Panc1 (cell line): ENCODE measurements at regions of chr11 and their contacts with region 1.

Region 1: GRCh38 chr11:7364660-7365059 is 113.0 kb downstream of the SYT9 start:
- DNase-seq: no peak
- ATAC-seq: no peak
- H3K4me3 ChIP-seq: no peak overlapping the region
- H3K27ac ChIP-seq: no peak overlapping the region
- H3K4me1 ChIP-seq: no peaks in the 10 kb centered on the region
- H3K27me3 ChIP-seq: no peaks in the 10 kb centered on the region
- CTCF ChIP-seq: no peak

Region 2: DNA sequence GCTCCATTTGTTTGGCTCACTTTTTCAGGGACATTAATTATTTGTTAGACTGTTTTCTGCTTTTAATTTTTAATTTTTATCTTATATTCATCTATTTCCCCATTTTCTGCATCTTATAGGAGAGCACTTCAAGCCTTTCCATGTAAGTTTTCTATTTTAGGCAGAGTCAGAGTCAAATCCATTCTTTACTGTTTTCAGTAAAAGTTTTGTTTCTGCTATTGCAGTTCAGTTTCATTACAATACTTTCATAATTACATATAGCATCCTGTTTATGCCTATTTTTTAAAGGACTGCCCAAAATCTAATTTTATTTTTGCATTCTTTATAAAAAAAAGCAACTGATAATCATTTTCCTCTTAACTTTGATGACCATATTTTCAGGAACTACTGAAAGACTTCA is 523.0 kb before region 1 on chr11:
- CTCF ChIA-PET with region 1: no interaction called
- POLR2A ChIA-PET with region 1: no interaction called
- in situ Hi-C with region 1: no loop called
- intact Hi-C with region 1: no loop called
- DNase-seq: no peak
- ATAC-seq: no peak
- H3K4me3 ChIP-seq: no peak overlapping the region
- H3K27ac ChIP-seq: no peak overlapping the region
- H3K4me1 ChIP-seq: no peaks in the 10 kb centered on the region
- H3K27me3 ChIP-seq: no peaks in the 10 kb centered on the region
- CTCF ChIP-seq: no peak

Region 3: DNA sequence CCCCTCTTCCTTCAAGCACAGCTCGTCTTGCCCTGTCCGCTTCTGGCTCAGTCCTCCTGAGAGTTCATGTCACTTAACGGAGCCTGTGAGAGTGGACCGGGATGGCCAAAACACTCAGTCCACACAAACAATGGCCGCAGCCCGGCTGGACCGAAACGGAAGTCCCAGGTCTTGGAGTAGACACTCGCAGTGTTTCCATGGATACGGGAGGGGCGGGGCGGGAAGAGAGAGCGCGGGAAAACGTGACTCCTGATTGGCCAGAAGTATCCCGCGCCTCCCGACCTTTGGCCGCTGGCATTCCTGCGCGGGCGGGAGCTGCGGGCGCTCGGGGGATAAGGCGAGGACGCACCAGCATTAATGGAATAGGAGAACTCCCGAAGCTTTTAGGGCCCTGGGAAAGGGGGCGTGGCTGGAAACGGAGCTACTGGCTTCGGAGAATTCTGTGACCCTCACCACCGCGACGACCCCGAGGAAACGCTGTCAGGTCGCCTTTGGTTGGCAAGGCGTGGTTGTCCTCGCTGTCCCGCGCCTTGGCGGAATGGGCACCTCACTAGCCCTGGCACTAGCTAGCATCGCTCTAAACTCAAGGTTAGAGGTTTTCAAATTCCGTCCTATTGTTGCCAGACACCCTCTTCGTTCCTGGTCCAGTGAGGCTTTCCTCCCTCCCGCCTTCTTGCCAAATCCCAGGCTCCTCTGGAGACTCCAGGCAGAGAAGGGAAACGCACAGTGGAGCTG is 344.3 kb before region 1 on chr11 and contains the starts of genes NLRP14 and ZNF214:
- CTCF ChIA-PET with region 1: no interaction called
- POLR2A ChIA-PET with region 1: no interaction called
- in situ Hi-C with region 1: no loop called
- intact Hi-C with region 1: no loop called
- DNase-seq: peak; percentile 90
- ATAC-seq: peak; percentile 99
- H3K4me3 ChIP-seq: peak within 1 kb of the TSS; percentile 75 to 97
- H3K27ac ChIP-seq: peak within 1 kb of the TSS; percentile 89
- H3K4me1 ChIP-seq: peaks cover 11% of the 10 kb centered on the region; the same call in 1 of the 2 replicates
- H3K27me3 ChIP-seq: peaks cover 6% of the 10 kb centered on the region
- CTCF ChIP-seq: no peak
- total RNA-seq, gene NLRP14: 0.08 TPM
- total RNA-seq, gene ZNF214: 3.0 TPM

Region 4: DNA sequence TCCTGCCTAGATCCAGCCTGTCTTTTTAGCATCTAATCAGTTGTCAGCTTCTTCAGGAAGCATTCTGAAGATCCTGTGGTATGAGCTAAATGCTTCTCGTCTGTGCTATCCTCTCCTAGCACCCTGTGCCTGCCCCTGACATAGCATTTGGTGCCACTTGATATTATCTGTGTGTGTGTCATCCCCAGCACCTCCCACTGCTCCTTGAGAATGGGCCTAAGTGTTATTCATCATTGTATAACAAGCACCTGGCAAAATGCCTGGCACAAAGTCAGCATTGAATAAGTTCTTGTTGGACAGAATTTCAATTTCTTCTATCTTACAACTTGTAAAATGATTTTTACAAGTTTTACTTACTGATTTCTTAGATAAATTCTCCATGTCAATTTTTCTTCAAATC is 92.6 kb after region 1 on chr11:
- CTCF ChIA-PET with region 1: no interaction called
- POLR2A ChIA-PET with region 1: interaction called, 11 read pairs
- in situ Hi-C with region 1: no loop called
- intact Hi-C with region 1: no loop called
- DNase-seq: no peak
- ATAC-seq: no peak
- H3K4me3 ChIP-seq: no peak overlapping the region
- H3K27ac ChIP-seq: no peak overlapping the region
- H3K4me1 ChIP-seq: no peaks in the 10 kb centered on the region
- H3K27me3 ChIP-seq: no peaks in the 10 kb centered on the region
- CTCF ChIP-seq: no peak

Region 5: DNA sequence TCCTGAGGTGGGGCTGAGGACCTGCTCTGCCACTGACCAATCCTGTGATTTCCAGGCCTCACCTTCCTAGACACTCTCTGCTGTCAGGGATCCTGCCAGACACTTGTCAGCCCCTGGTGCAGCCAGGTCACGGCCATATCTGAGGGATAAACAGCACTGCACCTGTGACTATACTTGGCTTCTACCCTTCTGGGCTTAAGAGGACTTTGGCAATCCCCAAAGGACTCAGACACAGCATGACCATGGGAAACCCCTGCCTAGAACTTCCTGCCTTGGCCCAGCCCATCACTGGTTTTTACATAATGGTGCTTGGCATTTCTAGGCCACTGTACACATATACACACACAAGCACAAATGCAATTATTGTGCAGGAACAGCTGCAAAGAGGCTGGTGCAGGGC is 109.1 kb after region 1 on chr11:
- CTCF ChIA-PET with region 1: no interaction called
- POLR2A ChIA-PET with region 1: no interaction called
- in situ Hi-C with region 1: no loop called
- intact Hi-C with region 1: no loop called
- DNase-seq: no peak
- ATAC-seq: no peak
- H3K4me3 ChIP-seq: no peak overlapping the region
- H3K27ac ChIP-seq: no peak overlapping the region
- H3K4me1 ChIP-seq: no peaks in the 10 kb centered on the region
- H3K27me3 ChIP-seq: peaks cover 14% of the 10 kb centered on the region
- CTCF ChIP-seq: no peak